ENCODE measurements at regions of chr12 and their contacts with region 1.

Region 1: DNA sequence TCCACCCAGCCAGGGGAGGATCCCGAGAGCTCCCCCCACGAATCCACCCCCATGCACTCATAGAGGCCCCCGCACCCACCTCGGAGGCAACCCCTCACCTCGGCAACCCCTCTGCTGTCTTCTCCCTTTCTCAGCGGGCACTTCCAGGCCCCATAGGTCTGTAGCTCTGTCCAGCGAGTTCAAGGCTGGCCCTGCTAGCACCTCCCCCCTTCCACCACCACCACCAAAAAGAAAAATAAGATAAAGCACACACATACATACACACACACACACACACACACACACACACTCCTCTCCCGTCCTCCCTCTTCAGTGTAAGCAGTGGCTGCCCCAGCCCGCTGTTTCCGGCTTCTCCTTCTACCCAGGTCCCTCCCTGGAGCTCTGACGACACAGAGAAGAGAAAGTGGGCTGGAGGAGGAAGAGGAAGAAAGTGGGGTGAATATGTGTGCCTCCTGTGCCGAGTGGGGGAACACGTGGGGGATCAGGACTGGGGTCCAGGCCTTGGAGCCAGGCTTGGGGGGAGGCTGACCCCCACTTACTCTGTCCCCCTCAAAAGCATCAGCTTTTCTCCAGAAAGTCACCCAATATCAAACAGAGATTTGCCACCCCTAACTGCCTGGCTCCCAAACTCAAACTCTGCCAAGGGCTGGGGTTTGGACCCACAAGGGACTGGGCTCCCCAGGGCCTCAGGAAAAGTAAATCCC is at the start of gene STAT6:
- DNase-seq: peak; percentile 79
- H3K4me3 ChIP-seq: peak within 1 kb of the TSS; percentile 31 to 72 (median 65)
- H3K27ac ChIP-seq: peak within 1 kb of the TSS; percentile 79
- H3K4me1 ChIP-seq: peaks cover 14% of the 10 kb centered on the region
- H3K27me3 ChIP-seq: peaks cover 0 to 2% of the 10 kb centered on the region in 2 experiments
- CTCF ChIP-seq: no peak
- POLR2A ChIP-seq: peak; percentile 31
- total RNA-seq, gene STAT6: 101 and 136 TPM in 2 replicates

Region 2: DNA sequence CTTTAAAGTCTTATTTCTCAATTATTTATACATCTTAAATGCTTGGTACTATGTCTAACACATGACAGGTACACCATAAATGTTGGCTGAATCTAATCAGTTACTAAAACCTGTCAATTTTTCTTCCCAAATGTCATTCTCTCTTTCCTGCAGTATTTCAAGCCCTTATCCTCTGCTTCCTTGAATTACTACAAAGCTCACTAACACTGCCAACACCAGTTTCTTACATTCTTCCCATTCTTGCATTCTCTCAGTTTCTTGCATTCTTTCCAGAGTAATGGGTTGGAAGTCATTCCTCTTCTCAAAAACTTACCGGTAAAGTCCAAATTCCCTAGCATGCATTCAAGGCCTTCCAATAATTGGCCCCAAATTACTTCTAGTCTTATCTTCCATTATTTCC is 912.3 kb before region 1 on chr12:
- CTCF ChIA-PET with region 1: no interaction called
- POLR2A ChIA-PET with region 1: no interaction called
- dilution Hi-C with region 1: no loop called
- intact Hi-C with region 1: no loop called
- DNase-seq: peak; percentile 69
- H3K4me3 ChIP-seq: no peak overlapping the region
- H3K27ac ChIP-seq: peak overlapping the region; percentile 97
- H3K4me1 ChIP-seq: peaks cover 32% of the 10 kb centered on the region
- H3K27me3 ChIP-seq: no peaks in the 10 kb centered on the region
- CTCF ChIP-seq: no peak
- POLR2A ChIP-seq: no peak

Region 3: DNA sequence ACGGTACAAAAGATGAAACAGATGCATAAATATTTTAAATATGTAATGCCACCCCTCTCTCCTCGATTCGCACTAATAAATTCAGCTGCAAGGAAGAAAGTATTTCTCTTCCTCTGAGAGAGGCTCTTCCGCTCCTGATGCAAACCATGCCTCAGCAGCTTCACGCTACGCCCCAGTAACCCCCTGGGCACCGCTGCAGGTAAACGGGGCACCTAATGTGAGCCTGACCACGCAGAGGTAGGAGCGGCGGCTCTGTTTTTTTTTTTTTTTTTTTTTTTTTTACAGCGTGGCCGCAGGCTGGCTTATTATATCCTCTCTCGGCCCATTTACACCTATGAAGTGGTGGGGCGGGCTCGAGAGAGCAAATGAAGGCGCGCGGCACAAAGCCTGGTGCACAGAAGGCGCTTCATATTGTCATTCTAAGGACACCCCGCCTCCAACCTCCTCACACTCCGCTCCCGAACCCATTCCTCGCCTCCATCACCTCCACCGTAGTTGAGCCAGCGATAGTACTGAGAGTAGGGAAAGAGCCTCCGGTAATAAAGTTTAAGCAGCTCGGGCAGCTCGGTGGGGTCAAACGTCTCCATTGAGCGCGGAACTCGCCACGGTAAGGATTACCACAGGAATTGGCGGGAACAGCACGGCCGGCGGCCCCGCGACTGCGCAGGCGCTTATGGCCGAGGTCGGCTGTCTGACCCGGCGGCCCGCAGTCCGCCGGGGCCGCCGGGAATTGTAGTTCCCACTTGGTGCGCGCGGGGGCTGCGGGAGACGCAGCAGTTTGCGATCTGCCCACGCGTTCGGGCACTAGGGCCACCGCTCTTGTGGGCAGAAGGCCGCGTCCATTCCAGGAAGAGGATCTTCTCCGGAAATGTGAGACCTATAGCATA is 359.2 kb before region 1 on chr12 and contains the start of gene PRIM1:
- CTCF ChIA-PET with region 1: no interaction called
- POLR2A ChIA-PET with region 1: no interaction called
- dilution Hi-C with region 1: no loop called
- intact Hi-C with region 1: loop called (anchors 1 kb)
- DNase-seq: peak; percentile 81
- H3K4me3 ChIP-seq: peak within 1 kb of the TSS; percentile 52 to 98 (median 94)
- H3K27ac ChIP-seq: peak within 1 kb of the TSS; percentile 75
- H3K4me1 ChIP-seq: peaks cover 11% of the 10 kb centered on the region
- H3K27me3 ChIP-seq: no peaks in the 10 kb centered on the region
- CTCF ChIP-seq: no peak
- POLR2A ChIP-seq: peak; percentile 62
- total RNA-seq, gene PRIM1: 12.1 and 13.4 TPM in 2 replicates

Region 4: GRCh38 chr12:57069523-57069922 is 41.7 kb before region 1 on chr12:
- CTCF ChIA-PET with region 1: interaction called, 449 read pairs
- POLR2A ChIA-PET with region 1: interaction called, 7 read pairs
- dilution Hi-C with region 1: no loop called
- intact Hi-C with region 1: loop called (anchors 1 kb)
- DNase-seq: peak; percentile 80
- H3K4me3 ChIP-seq: no peak overlapping the region
- H3K27ac ChIP-seq: no peak overlapping the region
- H3K4me1 ChIP-seq: no peaks in the 10 kb centered on the region
- H3K27me3 ChIP-seq: no peaks in the 10 kb centered on the region
- CTCF ChIP-seq: peak; percentile 75 to 80
- POLR2A ChIP-seq: no peak

Region 5: GRCh38 chr12:57088459-57089248 is 22.5 kb before region 1 on chr12 and contains the start of gene NAB2:
- CTCF ChIA-PET with region 1: interaction called, 158 read pairs
- POLR2A ChIA-PET with region 1: interaction called, 7 read pairs
- dilution Hi-C with region 1: no loop called
- intact Hi-C with region 1: loop called (anchors 1 kb)
- DNase-seq: peak; percentile 89
- H3K4me3 ChIP-seq: peak within 1 kb of the TSS; percentile 41 to 86 (median 49)
- H3K27ac ChIP-seq: peak within 1 kb of the TSS; percentile 76
- H3K4me1 ChIP-seq: peaks cover 19% of the 10 kb centered on the region
- H3K27me3 ChIP-seq: no peaks in the 10 kb centered on the region
- CTCF ChIP-seq: no peak
- POLR2A ChIP-seq: peak; percentile 57
- total RNA-seq, gene NAB2: 13.4 and 15.9 TPM in 2 replicates

Region 6: DNA sequence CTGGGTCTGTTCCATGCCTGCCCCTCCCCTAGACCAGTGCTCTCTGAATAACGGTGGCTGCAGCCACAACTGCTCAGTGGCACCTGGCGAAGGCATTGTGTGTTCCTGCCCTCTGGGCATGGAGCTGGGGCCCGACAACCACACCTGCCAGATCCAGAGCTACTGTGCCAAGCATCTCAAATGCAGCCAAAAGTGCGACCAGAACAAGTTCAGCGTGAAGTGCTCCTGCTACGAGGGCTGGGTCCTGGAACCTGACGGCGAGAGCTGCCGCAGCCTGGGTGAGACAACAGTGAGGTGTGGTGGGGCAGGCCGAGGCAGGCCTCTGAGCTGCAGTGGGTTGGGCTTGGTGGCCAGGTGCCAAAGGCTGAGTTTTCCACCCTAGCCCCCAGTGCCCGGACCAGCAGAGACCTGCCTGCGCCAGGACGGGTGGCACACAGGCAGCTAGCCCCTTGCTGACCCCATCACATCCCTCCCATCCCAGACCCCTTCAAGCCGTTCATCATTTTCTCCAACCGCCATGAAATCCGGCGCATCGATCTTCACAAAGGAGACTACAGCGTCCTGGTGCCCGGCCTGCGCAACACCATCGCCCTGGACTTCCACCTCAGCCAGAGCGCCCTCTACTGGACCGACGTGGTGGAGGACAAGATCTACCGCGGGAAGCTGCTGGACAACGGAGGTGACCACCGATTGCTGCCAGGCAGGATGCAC is 64.4 kb after region 1 on chr12:
- CTCF ChIA-PET with region 1: interaction called, 429 read pairs
- POLR2A ChIA-PET with region 1: no interaction called
- dilution Hi-C with region 1: no loop called
- intact Hi-C with region 1: no loop called
- DNase-seq: peak; percentile 24
- H3K4me3 ChIP-seq: no peak overlapping the region
- H3K27ac ChIP-seq: no peak overlapping the region
- H3K4me1 ChIP-seq: no peaks in the 10 kb centered on the region
- H3K27me3 ChIP-seq: no peaks in the 10 kb centered on the region
- CTCF ChIP-seq: peak; percentile 68 to 76
- POLR2A ChIP-seq: no peak

Region 7: GRCh38 chr12:57238854-57239554 is 127.8 kb after region 1 on chr12:
- CTCF ChIA-PET with region 1: no interaction called
- POLR2A ChIA-PET with region 1: no interaction called
- dilution Hi-C with region 1: no loop called
- intact Hi-C with region 1: loop called (anchors 5 kb)
- DNase-seq: peak; percentile 86
- H3K4me3 ChIP-seq: peak overlapping the region in 2 of 3 experiments; percentile 3 to 35
- H3K27ac ChIP-seq: no peak overlapping the region
- H3K4me1 ChIP-seq: peaks cover 28% of the 10 kb centered on the region
- H3K27me3 ChIP-seq: peaks cover 55 to 58% of the 10 kb centered on the region in 2 experiments
- CTCF ChIP-seq: peak; percentile 100
- POLR2A ChIP-seq: no peak

Region 8: GRCh38 chr12:57511588-57512325 is 400.6 kb after region 1 on chr12:
- CTCF ChIA-PET with region 1: no interaction called
- POLR2A ChIA-PET with region 1: no interaction called
- dilution Hi-C with region 1: no loop called
- intact Hi-C with region 1: no loop called
- DNase-seq: no peak
- H3K4me3 ChIP-seq: no peak overlapping the region
- H3K27ac ChIP-seq: no peak overlapping the region
- H3K4me1 ChIP-seq: peaks cover 3% of the 10 kb centered on the region
- H3K27me3 ChIP-seq: no peaks in the 10 kb centered on the region
- CTCF ChIP-seq: no peak
- POLR2A ChIP-seq: no peak

Measured in endothelial cell of umbilical vein (primary cell).